ENCODE measurements at regions of chr11 and their contacts with region 1.

Region 1: GRCh38 chr11:22625448-22626287 is at the start of gene FANCF:
- DNase-seq: peak; percentile 98
- H3K4me3 Mint-ChIP-seq: peak within 1 kb of the TSS; percentile 98
- H3K27ac Mint-ChIP-seq: peak within 1 kb of the TSS; percentile 97
- H3K4me1 Mint-ChIP-seq: peaks cover 41% of the 10 kb centered on the region
- H3K27me3 Mint-ChIP-seq: no peaks in the 10 kb centered on the region
- total RNA-seq, gene FANCF: 7.9 to 9.0 TPM

Region 2: GRCh38 chr11:22599458-22599857 is 26.2 kb before region 1 on chr11:
- CTCF ChIA-PET with region 1: no interaction called
- intact Hi-C with region 1: no loop called
- DNase-seq: no peak
- H3K4me3 Mint-ChIP-seq: no peak overlapping the region
- H3K27ac Mint-ChIP-seq: no peak overlapping the region
- H3K4me1 Mint-ChIP-seq: no peaks in the 10 kb centered on the region
- H3K27me3 Mint-ChIP-seq: peaks cover 15% of the 10 kb centered on the region

Region 3: GRCh38 chr11:22657101-22657694 is 31.5 kb after region 1 on chr11:
- CTCF ChIA-PET with region 1: interaction called, 3 read pairs
- intact Hi-C with region 1: loop called (anchors 1 kb)
- DNase-seq: peak; percentile 17
- H3K4me3 Mint-ChIP-seq: no peak overlapping the region
- H3K27ac Mint-ChIP-seq: peak overlapping the region; percentile 47
- H3K4me1 Mint-ChIP-seq: peaks cover 18% of the 10 kb centered on the region
- H3K27me3 Mint-ChIP-seq: no peaks in the 10 kb centered on the region

Region 4: DNA sequence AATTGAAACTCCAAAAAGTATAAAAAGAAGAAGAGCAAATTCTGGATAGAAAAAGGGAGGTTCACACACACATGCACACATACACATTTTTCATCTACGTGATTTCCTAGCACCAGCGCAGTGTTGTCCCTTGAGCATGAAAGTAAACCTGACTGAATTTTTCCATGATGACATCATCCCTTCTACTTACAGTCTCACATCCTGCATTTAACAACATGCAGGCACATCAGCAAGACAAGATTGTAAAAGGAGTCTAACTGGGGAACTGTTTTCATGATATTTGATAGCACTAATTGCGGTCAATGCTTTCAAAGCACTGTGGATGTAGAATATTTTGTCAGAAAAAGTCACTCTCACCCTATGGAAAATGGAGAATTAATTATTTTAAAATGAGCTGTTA is 77.4 kb after region 1 on chr11:
- CTCF ChIA-PET with region 1: interaction called, 3 read pairs
- intact Hi-C with region 1: loop called (anchors 1 kb)
- DNase-seq: peak; percentile 57
- H3K4me3 Mint-ChIP-seq: no peak overlapping the region
- H3K27ac Mint-ChIP-seq: peak overlapping the region; percentile 78
- H3K4me1 Mint-ChIP-seq: peaks cover 24% of the 10 kb centered on the region
- H3K27me3 Mint-ChIP-seq: no peaks in the 10 kb centered on the region

Region 5: DNA sequence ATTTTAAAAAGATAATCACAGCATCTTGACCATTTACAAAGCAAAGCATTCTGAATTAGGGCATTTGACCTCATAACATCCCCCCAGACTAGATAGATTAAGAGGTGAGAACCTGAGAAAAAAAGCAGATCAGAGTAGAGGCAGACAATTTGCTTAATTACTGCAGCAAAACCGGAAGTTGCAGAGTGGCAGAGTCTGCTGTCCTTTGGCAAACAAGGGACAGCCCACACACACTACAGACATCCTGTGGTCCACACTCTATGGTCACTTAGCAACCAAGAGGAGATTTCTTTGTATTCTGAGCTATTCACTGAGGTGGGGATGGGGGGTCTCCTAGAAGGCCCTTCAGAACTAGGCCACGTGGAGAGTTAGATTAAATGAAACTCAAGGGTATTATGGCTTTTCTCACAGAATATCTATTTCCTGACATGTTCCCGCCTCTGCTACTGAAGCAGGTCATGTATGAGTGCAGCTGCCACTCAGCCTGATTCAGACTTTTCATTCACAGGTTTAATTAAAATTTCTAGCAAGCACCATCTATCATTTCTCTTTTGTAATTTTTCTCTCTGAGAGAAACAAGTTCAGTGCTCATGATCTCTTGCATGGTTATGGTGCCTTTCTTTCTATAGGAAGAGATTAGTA is 155.4 kb after region 1 on chr11:
- CTCF ChIA-PET with region 1: no interaction called
- intact Hi-C with region 1: loop called (anchors 2 kb)
- DNase-seq: no peak
- H3K4me3 Mint-ChIP-seq: no peak overlapping the region
- H3K27ac Mint-ChIP-seq: no peak overlapping the region
- H3K4me1 Mint-ChIP-seq: peaks cover 5% of the 10 kb centered on the region
- H3K27me3 Mint-ChIP-seq: no peaks in the 10 kb centered on the region

Measured in activated naive CD4-positive, alpha-beta T cell treated with anti-CD3 and anti-CD28 coated beads for 36 hours (primary cell).